CD8-positive, alpha-beta memory T cell (primary cell): ENCODE measurements at regions of chr12 and their contacts with region 1.

Region 1: GRCh38 chr12:57238854-57239554 is 9.5 kb downstream of the SHMT2 start:
- DNase-seq: peak; percentile 80 to 88 (median 82)
- H3K4me3 ChIP-seq: peak overlapping the region; percentile 76
- H3K4me3 Mint-ChIP-seq: peak overlapping the region; percentile 79 to 98 (median 94)
- H3K27ac ChIP-seq: no peak overlapping the region
- H3K27ac Mint-ChIP-seq: peak overlapping the region in 6 of 8 donors; percentile 54 to 92 (median 76)
- H3K4me1 ChIP-seq: peaks cover 75% of the 10 kb centered on the region
- H3K4me1 Mint-ChIP-seq: peaks cover 57 to 79% (median 75%) of the 10 kb centered on the region in 3 donors
- H3K27me3 ChIP-seq: peaks cover 55% of the 10 kb centered on the region
- H3K27me3 Mint-ChIP-seq: peaks cover 56 to 73% of the 10 kb centered on the region in 2 donors

Region 2: DNA sequence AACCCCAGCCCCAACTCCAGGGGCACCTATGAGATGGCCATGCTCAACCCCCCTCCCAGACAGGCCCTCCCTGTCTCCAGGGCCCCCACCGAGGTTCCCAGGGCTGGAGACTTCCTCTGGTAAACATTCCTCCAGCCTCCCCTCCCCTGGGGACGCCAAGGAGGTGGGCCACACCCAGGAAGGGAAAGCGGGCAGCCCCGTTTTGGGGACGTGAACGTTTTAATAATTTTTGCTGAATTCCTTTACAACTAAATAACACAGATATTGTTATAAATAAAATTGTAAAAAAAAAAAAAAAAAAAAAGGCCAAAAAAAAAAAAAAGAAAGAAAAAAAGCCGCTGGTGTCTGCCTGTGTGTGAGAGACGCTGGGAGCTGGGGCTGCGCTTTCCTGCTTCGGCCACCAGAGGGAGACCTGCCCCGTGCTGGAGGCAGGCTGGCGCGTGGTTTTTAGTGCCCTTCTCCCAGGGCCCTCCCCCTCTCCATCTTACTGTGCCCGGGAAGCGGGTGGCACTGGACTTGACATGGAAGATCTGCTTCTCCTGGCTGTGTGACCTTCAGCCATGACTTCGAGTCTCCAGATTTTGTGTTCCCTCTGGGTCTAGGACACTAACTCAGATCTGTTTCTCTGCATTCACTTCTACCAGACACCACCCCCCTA is 25.8 kb before region 1 on chr12:
- CTCF ChIA-PET with region 1: interaction called, 262 read pairs
- POLR2A ChIA-PET with region 1: interaction called, 13 read pairs
- DNase-seq: peak; percentile 74 to 87 (median 80)
- H3K4me3 ChIP-seq: no peak overlapping the region
- H3K4me3 Mint-ChIP-seq: peak overlapping the region in 3 of 7 donors; percentile 25 to 79 (median 40)
- H3K27ac ChIP-seq: no peak overlapping the region
- H3K27ac Mint-ChIP-seq: peak overlapping the region in 5 of 8 donors; percentile 32 to 68 (median 59)
- H3K4me1 ChIP-seq: peaks cover 36% of the 10 kb centered on the region
- H3K4me1 Mint-ChIP-seq: peaks cover 31 to 49% (median 36%) of the 10 kb centered on the region in 3 donors
- H3K27me3 ChIP-seq: peaks cover 42% of the 10 kb centered on the region
- H3K27me3 Mint-ChIP-seq: peaks cover 43 to 46% of the 10 kb centered on the region in 2 donors

Region 3: DNA sequence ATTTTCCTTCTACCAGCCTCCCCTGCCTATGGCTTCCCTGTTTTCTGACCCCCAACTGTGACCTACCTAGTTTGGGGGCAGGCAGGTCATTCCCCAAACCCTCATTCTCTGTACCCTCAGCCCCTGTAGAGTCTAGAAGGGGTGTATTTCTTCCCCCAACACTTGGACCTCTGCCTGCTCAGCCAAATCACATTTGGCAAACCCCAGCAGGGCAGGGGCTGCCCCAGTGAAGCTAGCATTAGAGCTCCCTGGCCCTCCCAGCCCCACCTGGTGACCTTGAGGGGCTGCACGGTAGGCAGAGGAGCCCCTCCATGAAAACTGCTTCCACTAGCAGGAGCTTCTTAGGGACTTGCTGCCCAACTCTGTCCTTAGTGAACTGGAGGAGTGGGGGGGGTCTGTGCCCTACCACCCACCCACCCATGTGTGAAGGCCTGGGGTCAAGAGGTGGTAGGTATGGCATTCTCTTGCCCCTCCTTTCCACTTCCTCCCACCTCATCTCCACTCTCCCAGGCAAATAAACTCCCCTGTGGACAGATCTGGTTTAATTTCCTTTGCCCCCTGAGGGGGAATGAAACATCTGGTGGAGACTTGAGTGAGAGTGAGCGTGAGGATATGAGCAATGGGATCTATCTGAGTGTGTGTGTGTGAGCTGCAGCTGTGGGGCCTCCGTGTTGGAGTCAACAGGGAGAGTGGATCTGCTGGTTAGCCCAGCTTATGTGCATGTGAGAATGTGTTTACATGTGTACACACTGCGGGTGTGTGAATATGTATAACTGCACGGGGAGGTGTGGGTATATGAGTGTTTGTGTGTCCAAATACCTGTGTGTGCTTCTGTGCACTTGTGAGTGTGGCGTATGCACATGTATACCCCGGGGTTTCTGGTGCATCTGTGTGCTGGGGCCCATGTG is 20.7 kb before region 1 on chr12:
- CTCF ChIA-PET with region 1: interaction called, 274 read pairs
- POLR2A ChIA-PET with region 1: interaction called, 13 read pairs
- DNase-seq: no peak
- H3K4me3 ChIP-seq: no peak overlapping the region
- H3K4me3 Mint-ChIP-seq: peak overlapping the region in 6 of 7 donors; percentile 36 to 89 (median 64)
- H3K27ac ChIP-seq: no peak overlapping the region
- H3K27ac Mint-ChIP-seq: peak overlapping the region in 5 of 8 donors; percentile 11 to 94 (median 62)
- H3K4me1 ChIP-seq: peaks cover 50% of the 10 kb centered on the region
- H3K4me1 Mint-ChIP-seq: peaks cover 51 to 80% (median 56%) of the 10 kb centered on the region in 3 donors
- H3K27me3 ChIP-seq: peaks cover 90% of the 10 kb centered on the region
- H3K27me3 Mint-ChIP-seq: peaks cover 82 to 88% of the 10 kb centered on the region in 2 donors

Region 4: GRCh38 chr12:57248934-57249742 is 10.1 kb after region 1 on chr12:
- CTCF ChIA-PET with region 1: interaction called, 274 read pairs
- POLR2A ChIA-PET with region 1: no interaction called
- DNase-seq: no peak
- H3K4me3 ChIP-seq: no peak overlapping the region
- H3K4me3 Mint-ChIP-seq: no peak overlapping the region
- H3K27ac ChIP-seq: no peak overlapping the region
- H3K27ac Mint-ChIP-seq: peak overlapping the region in 1 of 8 donors; percentile 1
- H3K4me1 ChIP-seq: no peaks in the 10 kb centered on the region
- H3K4me1 Mint-ChIP-seq: peaks cover 1 to 2% (median 2%) of the 10 kb centered on the region in 3 donors
- H3K27me3 ChIP-seq: peaks cover 5% of the 10 kb centered on the region
- H3K27me3 Mint-ChIP-seq: peaks cover 7 to 8% of the 10 kb centered on the region in 2 donors

Region 5: GRCh38 chr12:57469296-57470164 is 230.5 kb after region 1 on chr12:
- CTCF ChIA-PET with region 1: no interaction called
- POLR2A ChIA-PET with region 1: no interaction called
- DNase-seq: no peak
- H3K4me3 ChIP-seq: no peak overlapping the region
- H3K4me3 Mint-ChIP-seq: no peak overlapping the region
- H3K27ac ChIP-seq: no peak overlapping the region
- H3K27ac Mint-ChIP-seq: peak overlapping the region in 6 of 8 donors; percentile 14 to 75 (median 47)
- H3K4me1 ChIP-seq: peaks cover 40% of the 10 kb centered on the region
- H3K4me1 Mint-ChIP-seq: peaks cover 34 to 51% (median 34%) of the 10 kb centered on the region in 3 donors
- H3K27me3 ChIP-seq: no peaks in the 10 kb centered on the region
- H3K27me3 Mint-ChIP-seq: no peaks in the 10 kb centered on the region